ENCODE measurements at regions of chr9 and their contacts with region 1.

Region 1: GRCh38 chr9:98255578-98256296 is at the start of gene TBC1D2:
- DNase-seq: peak; percentile 95 to 99 (median 98)
- ATAC-seq: peak; percentile 85 to 87
- H3K4me3 Mint-ChIP-seq: peak within 1 kb of the TSS; percentile 93 to 98 (median 96)
- H3K27ac Mint-ChIP-seq: peak within 1 kb of the TSS; percentile 94 to 98 (median 96)
- H3K4me1 Mint-ChIP-seq: peaks cover 19 to 40% (median 35%) of the 10 kb centered on the region in 4 donors
- H3K27me3 Mint-ChIP-seq: no peaks in the 10 kb centered on the region
- polyA plus RNA-seq, gene TBC1D2: 2.0 to 5.9 (median 2.8) TPM

Region 2: DNA sequence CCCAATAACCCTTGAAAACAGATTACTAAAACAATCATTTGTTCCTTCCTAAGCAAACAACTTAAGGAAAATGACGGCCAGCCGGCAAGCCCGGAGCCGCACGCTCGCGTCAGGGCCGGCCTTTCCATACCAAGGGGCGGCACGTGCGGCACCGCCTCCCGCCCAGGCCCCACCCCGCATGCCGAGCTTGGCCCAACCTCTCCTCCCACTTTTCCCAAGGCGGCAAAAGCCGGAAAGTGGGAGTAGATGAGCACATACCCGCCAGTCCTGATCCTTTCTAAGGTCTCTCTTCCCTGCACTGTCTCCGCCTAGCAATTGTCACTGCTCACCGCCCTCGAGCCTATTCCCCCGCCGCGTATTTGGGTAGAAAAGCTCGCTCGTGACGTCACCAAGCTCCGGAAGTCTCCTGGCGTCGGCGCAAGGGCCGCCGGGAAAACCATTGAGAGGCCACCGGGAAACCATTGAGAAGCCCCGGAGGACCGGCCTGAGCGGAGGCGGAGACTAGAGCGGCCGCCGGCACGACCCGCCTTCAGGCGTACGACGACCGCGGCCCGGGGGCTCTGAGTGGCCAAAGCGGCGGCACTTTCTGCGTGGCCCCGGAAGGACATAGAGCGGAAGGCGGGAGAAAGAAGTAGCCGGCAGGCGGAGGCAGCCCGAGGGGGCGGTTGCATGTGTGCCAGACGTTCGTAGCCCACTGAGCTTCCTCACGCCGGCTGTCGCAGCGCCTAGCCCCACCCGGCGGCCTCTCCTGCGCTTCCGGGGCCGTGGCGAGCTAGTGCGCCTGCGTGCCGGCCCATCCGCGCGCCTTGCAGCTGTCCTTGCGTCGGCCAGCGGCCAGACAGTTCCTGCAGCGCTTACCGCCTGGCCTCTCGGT is 622.5 kb before region 1 on chr9 and contains the starts of genes NCBP1 and TSTD2:
- POLR2A ChIA-PET with region 1: interaction called, 12 read pairs
- DNase-seq: peak; percentile 89 to 98 (median 96)
- ATAC-seq: peak; percentile 87 to 90
- H3K4me3 Mint-ChIP-seq: peak within 1 kb of the TSS; percentile 90 to 100 (median 98)
- H3K27ac Mint-ChIP-seq: peak within 1 kb of the TSS; percentile 95 to 100 (median 99)
- H3K4me1 Mint-ChIP-seq: peaks cover 40 to 77% (median 61%) of the 10 kb centered on the region in 4 donors
- H3K27me3 Mint-ChIP-seq: no peaks in the 10 kb centered on the region
- polyA plus RNA-seq, gene NCBP1: 17.9 to 19.7 (median 18.1) TPM
- polyA plus RNA-seq, gene TSTD2: 7.0 to 8.9 (median 7.3) TPM

Region 3: DNA sequence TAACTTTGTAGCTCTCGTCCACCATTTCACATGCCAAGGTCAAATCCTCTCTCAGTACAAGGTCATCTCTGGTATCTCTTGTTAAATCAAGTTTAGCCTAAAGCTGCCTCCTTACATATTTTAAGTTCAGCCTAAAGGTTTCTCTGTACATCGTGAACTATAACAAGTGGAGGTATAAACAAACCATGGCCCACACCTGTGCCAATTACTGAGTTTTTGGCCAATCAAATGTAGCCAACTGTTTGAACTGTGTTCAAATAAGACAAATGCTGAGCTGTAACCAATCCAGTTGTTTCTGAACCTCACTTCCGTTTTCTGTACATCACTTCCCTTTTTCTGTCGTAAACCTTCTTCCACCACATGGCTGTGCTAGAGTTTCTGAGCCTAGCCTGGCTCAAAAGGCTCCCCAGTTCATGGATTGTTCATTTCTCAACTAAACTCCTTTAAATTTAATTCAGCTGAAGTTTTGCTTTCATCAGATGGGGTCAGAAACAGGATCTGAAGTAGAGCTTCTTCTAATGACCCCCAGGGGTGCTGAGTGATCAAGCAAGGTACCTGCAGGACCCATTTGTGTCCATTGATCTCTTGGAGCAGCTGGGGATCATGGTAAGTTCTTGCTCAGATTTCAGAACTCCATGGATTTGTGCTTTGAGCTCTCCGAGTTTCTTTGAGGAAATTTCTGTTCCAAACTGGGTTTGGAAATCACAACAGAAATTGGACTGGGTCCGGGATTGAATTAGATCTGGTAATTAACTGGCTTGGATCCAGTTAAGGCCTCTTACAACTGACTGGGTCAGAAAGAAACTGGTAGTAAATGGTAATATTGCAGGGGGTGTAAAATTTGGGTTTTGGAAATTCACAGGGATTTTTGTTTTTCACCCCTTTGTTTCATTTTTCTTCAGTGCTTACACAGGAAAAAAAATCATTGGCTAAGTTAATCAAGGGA is 210.2 kb before region 1 on chr9:
- POLR2A ChIA-PET with region 1: interaction called, 18 read pairs
- DNase-seq: peak in 9 of 10 donors; percentile 9 to 80 (median 55)
- ATAC-seq: peak; percentile 97 to 98
- H3K4me3 Mint-ChIP-seq: peak overlapping the region; percentile 77 to 88 (median 82)
- H3K27ac Mint-ChIP-seq: peak overlapping the region; percentile 86 to 100 (median 93)
- H3K4me1 Mint-ChIP-seq: peaks cover 18 to 51% (median 31%) of the 10 kb centered on the region in 4 donors
- H3K27me3 Mint-ChIP-seq: peaks cover 0 to 5% (median 0%) of the 10 kb centered on the region in 5 donors

Region 4: GRCh38 chr9:98074115-98074990 is 181.4 kb before region 1 on chr9:
- POLR2A ChIA-PET with region 1: interaction called, 22 read pairs
- DNase-seq: peak; percentile 46 to 80 (median 69)
- ATAC-seq: no peak
- H3K4me3 Mint-ChIP-seq: peak overlapping the region in 9 of 10 donors; percentile 52 to 84 (median 66)
- H3K27ac Mint-ChIP-seq: peak overlapping the region; percentile 93 to 98 (median 96)
- H3K4me1 Mint-ChIP-seq: peaks cover 5 to 48% (median 37%) of the 10 kb centered on the region in 4 donors
- H3K27me3 Mint-ChIP-seq: no peaks in the 10 kb centered on the region

Region 5: GRCh38 chr9:98108531-98109031 is 147.2 kb before region 1 on chr9:
- POLR2A ChIA-PET with region 1: interaction called, 71 read pairs
- DNase-seq: peak in 7 of 10 donors; percentile 13 to 73 (median 53)
- ATAC-seq: peak; percentile 90 to 96
- H3K4me3 Mint-ChIP-seq: peak overlapping the region; percentile 58 to 84 (median 76)
- H3K27ac Mint-ChIP-seq: peak overlapping the region; percentile 93 to 99 (median 98)
- H3K4me1 Mint-ChIP-seq: peaks cover 34 to 91% (median 78%) of the 10 kb centered on the region in 4 donors
- H3K27me3 Mint-ChIP-seq: no peaks in the 10 kb centered on the region

Region 6: GRCh38 chr9:98192503-98193335 is 63.0 kb before region 1 on chr9 and contains the start of gene CORO2A:
- POLR2A ChIA-PET with region 1: interaction called, 27 read pairs
- DNase-seq: peak; percentile 48 to 76 (median 57)
- ATAC-seq: peak; percentile 66 to 76
- H3K4me3 Mint-ChIP-seq: peak within 1 kb of the TSS; percentile 81 to 93 (median 88)
- H3K27ac Mint-ChIP-seq: peak within 1 kb of the TSS; percentile 65 to 92 (median 86)
- H3K4me1 Mint-ChIP-seq: peaks cover 22 to 46% (median 38%) of the 10 kb centered on the region in 4 donors
- H3K27me3 Mint-ChIP-seq: no peaks in the 10 kb centered on the region
- polyA plus RNA-seq, gene CORO2A: 5.2 to 11.7 (median 9.5) TPM